Naive thymus-derived CD4-positive, alpha-beta T cell (primary cell): ENCODE measurements at regions of chr13 and their contacts with region 1.

Region 1: DNA sequence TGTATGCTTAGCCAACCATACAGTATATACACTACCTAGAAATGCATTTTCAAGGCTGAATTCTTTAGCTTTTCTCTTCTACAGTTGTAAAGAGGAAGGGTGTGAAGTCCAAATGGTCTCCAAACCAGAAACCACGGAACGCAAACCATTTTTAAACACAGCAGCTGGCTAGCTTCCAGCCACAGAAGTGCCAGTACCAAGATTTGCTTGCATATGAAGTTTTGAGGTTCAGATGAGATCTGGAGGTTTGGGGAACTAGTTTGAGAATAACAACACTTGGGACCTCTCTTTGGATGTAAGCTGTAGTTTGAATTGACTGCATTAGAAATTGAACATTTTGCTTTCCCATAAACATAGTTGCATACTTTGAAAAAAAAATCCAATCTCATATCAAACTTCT is 1243.5 kb downstream of the EFNB2 start:
- DNase-seq: no peak
- ATAC-seq: no peak
- H3K4me3 ChIP-seq: no peak overlapping the region
- H3K4me3 Mint-ChIP-seq: no peak overlapping the region
- H3K27ac ChIP-seq: no peak overlapping the region
- H3K27ac Mint-ChIP-seq: no peak overlapping the region
- H3K4me1 ChIP-seq: no peaks in the 10 kb centered on the region
- H3K4me1 Mint-ChIP-seq: no peaks in the 10 kb centered on the region
- H3K27me3 ChIP-seq: no peaks in the 10 kb centered on the region
- H3K27me3 Mint-ChIP-seq: peaks cover 0 to 8% (median 3%) of the 10 kb centered on the region in 5 donors

Region 2: DNA sequence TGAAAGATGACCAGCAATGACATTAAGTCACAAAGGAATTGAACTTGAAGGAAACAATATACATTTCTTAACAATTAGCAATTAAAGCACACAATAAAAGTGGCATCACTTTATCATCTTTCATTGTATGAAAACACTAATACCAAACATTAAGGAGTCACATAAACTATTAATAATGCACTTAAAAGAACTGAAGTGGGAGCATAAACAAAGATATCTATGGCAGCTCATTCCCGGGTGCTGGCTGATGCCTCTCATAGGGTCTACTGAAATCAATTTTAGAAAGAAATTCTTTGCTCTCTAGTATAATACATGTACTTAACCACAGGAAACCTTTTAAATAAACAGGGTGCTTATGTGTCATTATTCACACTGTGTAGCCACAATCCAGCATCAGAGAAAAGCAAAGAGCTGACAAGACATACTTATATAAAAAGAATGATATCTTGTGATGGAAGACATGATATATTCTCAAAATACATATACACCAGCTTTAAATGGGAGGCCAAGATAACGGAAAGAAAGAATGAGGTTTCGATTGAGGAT is 35.7 kb after region 1 on chr13:
- CTCF ChIA-PET with region 1: no interaction called
- POLR2A ChIA-PET with region 1: no interaction called
- intact Hi-C with region 1: loop called in 1 of 2 experiments (anchors 1 kb)
- DNase-seq: no peak
- ATAC-seq: no peak
- H3K4me3 ChIP-seq: no peak overlapping the region
- H3K4me3 Mint-ChIP-seq: no peak overlapping the region
- H3K27ac ChIP-seq: no peak overlapping the region
- H3K27ac Mint-ChIP-seq: no peak overlapping the region
- H3K4me1 ChIP-seq: no peaks in the 10 kb centered on the region
- H3K4me1 Mint-ChIP-seq: peaks cover 0 to 4% (median 0%) of the 10 kb centered on the region in 7 donors
- H3K27me3 ChIP-seq: no peaks in the 10 kb centered on the region
- H3K27me3 Mint-ChIP-seq: no peaks in the 10 kb centered on the region